ENCODE measurements at regions of chr4 and their contacts with region 1.

Region 1: GRCh38 chr4:77765720-77766119 is 53.4 kb downstream of the CNOT6L start:
- DNase-seq: no peak
- ATAC-seq: no peak
- H3K4me3 ChIP-seq: no peak overlapping the region
- H3K4me3 Mint-ChIP-seq: no peak overlapping the region
- H3K27ac ChIP-seq: no peak overlapping the region
- H3K27ac Mint-ChIP-seq: peak overlapping the region; percentile 55
- H3K4me1 ChIP-seq: no peaks in the 10 kb centered on the region
- H3K4me1 Mint-ChIP-seq: peaks cover 53% of the 10 kb centered on the region
- H3K27me3 ChIP-seq: no peaks in the 10 kb centered on the region
- H3K27me3 Mint-ChIP-seq: no peaks in the 10 kb centered on the region
- CTCF ChIP-seq: no peak

Region 2: DNA sequence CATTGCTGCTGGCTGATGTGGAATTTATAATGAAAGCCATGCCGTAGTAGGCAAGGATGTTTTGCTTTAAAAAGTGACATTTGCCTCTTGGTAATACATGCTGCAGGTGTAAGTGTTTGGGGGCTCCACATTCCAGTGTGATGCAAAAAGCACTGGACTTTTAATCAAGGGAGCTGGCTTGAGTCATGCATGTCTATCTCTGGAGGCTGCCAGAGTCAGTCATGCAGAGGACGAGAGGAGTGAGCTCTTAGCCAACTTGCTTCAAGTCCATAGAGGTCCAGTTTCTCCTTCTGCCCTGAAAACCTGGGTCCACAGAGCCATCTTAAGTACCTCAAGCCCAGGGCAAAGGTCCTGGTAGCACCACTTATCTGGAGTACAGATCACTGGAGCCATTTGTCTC is 171.7 kb before region 1 on chr4:
- CTCF ChIA-PET with region 1: no interaction called
- POLR2A ChIA-PET with region 1: no interaction called
- intact Hi-C with region 1: no loop called
- DNase-seq: no peak
- ATAC-seq: no peak
- H3K4me3 ChIP-seq: no peak overlapping the region
- H3K4me3 Mint-ChIP-seq: no peak overlapping the region
- H3K27ac ChIP-seq: no peak overlapping the region
- H3K27ac Mint-ChIP-seq: no peak overlapping the region
- H3K4me1 ChIP-seq: no peaks in the 10 kb centered on the region
- H3K4me1 Mint-ChIP-seq: peaks cover 7% of the 10 kb centered on the region
- H3K27me3 ChIP-seq: no peaks in the 10 kb centered on the region
- H3K27me3 Mint-ChIP-seq: peaks cover 4% of the 10 kb centered on the region
- CTCF ChIP-seq: no peak

Region 3: DNA sequence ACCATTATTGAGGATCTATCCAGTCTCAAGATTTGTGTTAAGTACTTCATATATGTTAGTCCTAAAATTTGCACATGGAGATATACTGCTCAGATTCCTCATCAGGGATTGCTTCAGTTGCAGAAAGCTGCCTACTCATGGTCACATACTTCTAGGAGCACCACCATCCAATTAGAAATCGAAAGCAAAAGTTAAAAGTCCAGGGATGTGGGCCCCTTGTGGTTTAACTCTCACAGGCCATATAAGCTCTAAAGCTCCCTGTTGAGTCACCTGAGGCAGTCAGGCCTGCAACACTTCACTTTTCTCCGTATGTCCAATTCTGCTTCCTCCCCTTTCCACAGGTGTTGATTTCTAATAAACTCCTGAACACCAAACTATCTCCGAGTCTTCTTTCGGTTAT is 30.8 kb before region 1 on chr4:
- CTCF ChIA-PET with region 1: no interaction called
- POLR2A ChIA-PET with region 1: interaction called, 3 read pairs
- intact Hi-C with region 1: loop called in 1 of 2 experiments (anchors 5 kb)
- DNase-seq: peak in 4 of 9 experiments; percentile 5 to 77 (median 42)
- ATAC-seq: peak; percentile 74
- H3K4me3 ChIP-seq: no peak overlapping the region
- H3K4me3 Mint-ChIP-seq: peak overlapping the region; percentile 77
- H3K27ac ChIP-seq: peak overlapping the region in 1 of 2 experiments; percentile 23
- H3K27ac Mint-ChIP-seq: peak overlapping the region; percentile 86
- H3K4me1 ChIP-seq: peaks cover 28% of the 10 kb centered on the region
- H3K4me1 Mint-ChIP-seq: peaks cover 74% of the 10 kb centered on the region
- H3K27me3 ChIP-seq: no peaks in the 10 kb centered on the region
- H3K27me3 Mint-ChIP-seq: no peaks in the 10 kb centered on the region
- CTCF ChIP-seq: no peak

Region 4: GRCh38 chr4:77777135-77777807 is 11.6 kb after region 1 on chr4:
- CTCF ChIA-PET with region 1: no interaction called
- POLR2A ChIA-PET with region 1: interaction called, 4 read pairs
- intact Hi-C with region 1: loop called in 1 of 2 experiments (anchors 2 kb)
- DNase-seq: no peak
- ATAC-seq: no peak
- H3K4me3 ChIP-seq: no peak overlapping the region
- H3K4me3 Mint-ChIP-seq: no peak overlapping the region
- H3K27ac ChIP-seq: peak overlapping the region in 1 of 2 experiments; percentile 27
- H3K27ac Mint-ChIP-seq: peak overlapping the region; percentile 5
- H3K4me1 ChIP-seq: peaks cover 52% of the 10 kb centered on the region
- H3K4me1 Mint-ChIP-seq: peaks cover 70% of the 10 kb centered on the region
- H3K27me3 ChIP-seq: no peaks in the 10 kb centered on the region
- H3K27me3 Mint-ChIP-seq: no peaks in the 10 kb centered on the region
- CTCF ChIP-seq: no peak